ENCODE measurements at regions of chr17 and their contacts with region 1.

Region 1: DNA sequence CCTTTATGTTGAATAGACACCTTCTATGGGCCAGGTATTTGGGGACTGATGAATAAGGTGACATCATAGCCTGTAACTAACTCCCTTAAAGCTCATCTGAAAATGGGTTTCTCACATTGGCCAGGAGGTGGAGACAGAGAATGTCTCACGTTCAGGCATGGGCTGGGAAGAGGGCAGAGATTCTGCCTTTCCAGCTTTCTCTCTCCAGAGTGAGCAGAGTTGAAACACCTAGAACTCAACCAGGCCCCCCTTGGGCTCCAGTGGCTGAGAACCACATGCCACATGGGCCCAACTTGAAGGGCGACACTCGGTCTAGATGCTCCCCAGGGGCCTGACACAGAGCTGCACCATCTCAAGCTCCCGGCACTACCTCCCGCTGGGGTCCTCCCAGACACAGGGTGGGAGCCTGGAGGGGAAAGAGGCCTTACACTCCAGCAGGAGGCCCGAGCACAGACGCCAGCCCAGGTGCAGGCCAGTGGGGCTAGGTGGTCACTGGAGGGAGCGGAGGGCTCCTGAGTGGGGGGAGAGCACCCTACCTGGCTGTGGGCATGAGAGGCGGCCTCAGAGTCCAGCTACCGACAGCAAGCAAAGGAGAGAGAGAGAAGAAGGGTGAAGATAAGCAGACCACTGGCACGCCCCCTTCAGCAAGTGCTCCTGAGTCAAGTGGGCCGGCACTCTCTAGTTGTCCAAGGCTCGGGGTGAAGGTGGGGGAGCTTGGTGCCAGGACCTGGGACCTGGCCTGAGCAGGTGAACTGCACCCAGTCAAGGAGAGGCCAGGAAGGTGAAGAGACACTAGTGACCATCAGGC is 55.9 kb downstream of the MYO18A start:
- DNase-seq: peak; percentile 37 to 60 (median 42)
- H3K4me3 ChIP-seq: no peak overlapping the region
- H3K4me3 Mint-ChIP-seq: no peak overlapping the region
- H3K27ac ChIP-seq: no peak overlapping the region
- H3K27ac Mint-ChIP-seq: no peak overlapping the region
- H3K4me1 ChIP-seq: peaks cover 7% of the 10 kb centered on the region
- H3K4me1 Mint-ChIP-seq: peaks cover 6 to 12% (median 7%) of the 10 kb centered on the region in 4 donors
- H3K27me3 ChIP-seq: no peaks in the 10 kb centered on the region
- H3K27me3 Mint-ChIP-seq: no peaks in the 10 kb centered on the region

Region 2: DNA sequence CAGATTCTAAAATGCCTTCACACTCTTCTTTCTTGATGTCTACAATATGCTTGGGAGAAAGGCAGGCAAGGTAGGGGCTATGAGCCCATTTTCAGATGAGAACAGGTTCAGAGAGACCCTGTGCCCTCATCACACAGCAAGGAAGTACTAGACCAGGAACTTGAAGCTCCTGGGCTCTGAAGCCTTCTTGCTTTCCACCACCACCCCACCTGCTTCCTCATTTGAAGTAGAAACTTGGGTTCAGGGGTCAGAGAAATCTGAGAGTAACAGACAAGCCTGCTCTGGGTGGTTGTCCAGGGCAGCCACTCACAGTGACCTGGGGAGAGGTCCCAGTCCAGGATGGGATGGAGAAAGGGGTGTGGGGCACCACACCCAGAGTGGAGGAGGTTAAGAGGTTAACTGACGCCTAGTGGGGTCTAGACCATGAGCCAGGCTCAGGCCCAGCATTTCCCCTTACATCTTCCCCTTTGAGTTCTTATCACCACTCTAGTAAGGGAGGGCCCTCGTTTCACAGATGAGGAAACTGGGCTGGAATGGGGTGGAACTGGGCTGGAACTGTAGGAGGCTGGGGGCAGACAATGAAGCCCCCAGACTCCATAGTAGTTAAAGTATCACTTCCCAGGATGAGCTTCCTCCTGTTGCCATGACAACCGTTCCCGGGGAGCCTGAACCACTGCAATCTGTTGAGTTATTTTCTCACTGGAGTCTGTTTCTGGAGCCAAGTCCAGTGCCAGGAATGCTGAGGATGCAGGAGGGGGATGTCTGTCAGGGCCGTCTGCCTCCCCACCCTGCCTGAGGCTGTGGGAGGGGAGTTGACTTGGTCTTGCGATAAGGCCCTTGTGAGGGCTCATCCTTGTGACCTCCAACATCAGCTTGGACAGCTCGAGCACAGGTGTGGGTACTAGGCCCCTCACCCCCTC is 156.8 kb before region 1 on chr17:
- CTCF ChIA-PET with region 1: interaction called, 318 read pairs
- POLR2A ChIA-PET with region 1: no interaction called
- intact Hi-C with region 1: no loop called
- DNase-seq: peak in 1 of 5 donors; percentile 25
- H3K4me3 ChIP-seq: no peak overlapping the region
- H3K4me3 Mint-ChIP-seq: no peak overlapping the region
- H3K27ac ChIP-seq: no peak overlapping the region
- H3K27ac Mint-ChIP-seq: peak overlapping the region in 2 of 7 donors; percentile 19 to 39
- H3K4me1 ChIP-seq: no peaks in the 10 kb centered on the region
- H3K4me1 Mint-ChIP-seq: peaks cover 0 to 3% (median 0%) of the 10 kb centered on the region in 4 donors
- H3K27me3 ChIP-seq: no peaks in the 10 kb centered on the region
- H3K27me3 Mint-ChIP-seq: peaks cover 8 to 14% of the 10 kb centered on the region in 2 donors

Region 3: GRCh38 chr17:29111816-29112499 is 12.4 kb before region 1 on chr17:
- CTCF ChIA-PET with region 1: interaction called, 77 read pairs
- POLR2A ChIA-PET with region 1: no interaction called
- intact Hi-C with region 1: no loop called
- DNase-seq: peak; percentile 45 to 63 (median 55)
- H3K4me3 ChIP-seq: no peak overlapping the region
- H3K4me3 Mint-ChIP-seq: no peak overlapping the region
- H3K27ac ChIP-seq: no peak overlapping the region
- H3K27ac Mint-ChIP-seq: peak overlapping the region in 3 of 7 donors; percentile 8 to 70 (median 23)
- H3K4me1 ChIP-seq: peaks cover 2% of the 10 kb centered on the region
- H3K4me1 Mint-ChIP-seq: peaks cover 2 to 6% (median 5%) of the 10 kb centered on the region in 4 donors
- H3K27me3 ChIP-seq: no peaks in the 10 kb centered on the region
- H3K27me3 Mint-ChIP-seq: no peaks in the 10 kb centered on the region

Region 4: GRCh38 chr17:29140051-29140621 is 15.8 kb after region 1 on chr17:
- CTCF ChIA-PET with region 1: interaction called, 213 read pairs
- POLR2A ChIA-PET with region 1: interaction called, 32 read pairs
- intact Hi-C with region 1: loop called (anchors 1 kb)
- DNase-seq: peak; percentile 65 to 92 (median 69)
- H3K4me3 ChIP-seq: peak overlapping the region; percentile 55 to 72
- H3K4me3 Mint-ChIP-seq: peak overlapping the region; percentile 90 to 98 (median 92)
- H3K27ac ChIP-seq: peak overlapping the region; percentile 81
- H3K27ac Mint-ChIP-seq: peak overlapping the region; percentile 91 to 99 (median 97)
- H3K4me1 ChIP-seq: peaks cover 69% of the 10 kb centered on the region
- H3K4me1 Mint-ChIP-seq: peaks cover 49 to 82% (median 63%) of the 10 kb centered on the region in 4 donors
- H3K27me3 ChIP-seq: no peaks in the 10 kb centered on the region
- H3K27me3 Mint-ChIP-seq: no peaks in the 10 kb centered on the region

Region 5: GRCh38 chr17:29148790-29149430 is 24.6 kb after region 1 on chr17:
- CTCF ChIA-PET with region 1: interaction called, 213 read pairs
- POLR2A ChIA-PET with region 1: interaction called, 18 read pairs
- intact Hi-C with region 1: loop called (anchors 1 kb)
- DNase-seq: peak; percentile 88 to 91 (median 89)
- H3K4me3 ChIP-seq: peak overlapping the region; percentile 41 to 42
- H3K4me3 Mint-ChIP-seq: peak overlapping the region; percentile 68 to 84 (median 75)
- H3K27ac ChIP-seq: peak overlapping the region; percentile 53
- H3K27ac Mint-ChIP-seq: peak overlapping the region; percentile 66 to 92 (median 90)
- H3K4me1 ChIP-seq: peaks cover 27% of the 10 kb centered on the region
- H3K4me1 Mint-ChIP-seq: peaks cover 23 to 62% (median 33%) of the 10 kb centered on the region in 4 donors
- H3K27me3 ChIP-seq: no peaks in the 10 kb centered on the region
- H3K27me3 Mint-ChIP-seq: no peaks in the 10 kb centered on the region

Region 6: DNA sequence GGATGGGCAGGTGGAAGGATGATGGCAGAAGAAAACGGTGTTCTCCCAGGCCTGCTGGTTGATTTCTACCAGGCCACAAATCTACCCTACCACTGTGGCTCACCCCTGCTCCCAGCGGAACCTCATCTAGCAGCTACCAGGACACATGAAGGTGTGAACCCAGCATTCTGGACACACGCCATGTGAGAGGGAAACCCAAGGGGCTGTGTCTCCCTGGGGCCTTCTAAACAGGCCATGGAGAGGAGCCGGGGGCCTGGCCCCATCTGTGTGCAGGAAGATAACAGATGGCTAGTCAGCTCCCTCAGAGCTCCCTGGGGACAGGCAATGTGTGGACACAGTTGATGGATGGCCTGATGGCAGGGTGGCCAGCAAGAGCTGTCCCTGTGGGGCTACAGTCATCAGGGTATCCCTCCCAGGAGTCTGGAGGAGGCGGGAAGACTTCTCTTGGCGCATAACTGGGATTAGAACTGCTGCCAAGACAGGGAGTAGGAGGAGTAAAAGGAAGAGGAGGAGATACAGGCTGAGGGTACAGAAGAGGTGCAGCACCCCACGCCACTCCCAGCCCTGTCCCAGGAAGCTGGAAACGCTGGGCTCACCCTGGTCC is 38.5 kb after region 1 on chr17:
- CTCF ChIA-PET with region 1: interaction called, 15 read pairs
- POLR2A ChIA-PET with region 1: no interaction called
- intact Hi-C with region 1: no loop called
- DNase-seq: no peak
- H3K4me3 ChIP-seq: no peak overlapping the region
- H3K4me3 Mint-ChIP-seq: no peak overlapping the region
- H3K27ac ChIP-seq: no peak overlapping the region
- H3K27ac Mint-ChIP-seq: no peak overlapping the region
- H3K4me1 ChIP-seq: peaks cover 13% of the 10 kb centered on the region
- H3K4me1 Mint-ChIP-seq: peaks cover 5 to 26% (median 17%) of the 10 kb centered on the region in 4 donors
- H3K27me3 ChIP-seq: no peaks in the 10 kb centered on the region
- H3K27me3 Mint-ChIP-seq: no peaks in the 10 kb centered on the region